Adrenal gland (tissue), 19 donors: ENCODE measurements at regions of chr19 and their contacts with region 1.

Region 1: GRCh38 chr19:23758187-23759074 is at the start of gene ZNF681:
- DNase-seq: peak; percentile 88 to 97 (median 94)
- H3K4me3 ChIP-seq: peak within 1 kb of the TSS; percentile 33 to 71 (median 62)
- H3K27ac ChIP-seq: peak within 1 kb of the TSS in 4 of 5 donors; percentile 57 to 80 (median 68)
- H3K4me1 ChIP-seq: peaks cover 0 to 9% of the 10 kb centered on the region in 2 donors
- H3K27me3 ChIP-seq: no peaks in the 10 kb centered on the region
- CTCF ChIP-seq: peak in 4 of 6 experiments; percentile 17 to 35 (median 28)
- POLR2A ChIP-seq: peak; percentile 40 to 78
- total RNA-seq, gene ZNF681: 0.96 to 5.8 (median 2.0) TPM

Region 2: GRCh38 chr19:23686621-23687423 is 71.6 kb before region 1 on chr19 and contains the start of gene ZNF675:
- intact Hi-C with region 1: loop called in 1 of 2 experiments (anchors 10 kb)
- DNase-seq: peak; percentile 88 to 98 (median 93)
- H3K4me3 ChIP-seq: peak within 1 kb of the TSS; percentile 37 to 91 (median 74)
- H3K27ac ChIP-seq: peak within 1 kb of the TSS; percentile 84 to 96 (median 88)
- H3K4me1 ChIP-seq: peaks cover 4 to 14% of the 10 kb centered on the region in 2 donors
- H3K27me3 ChIP-seq: no peaks in the 10 kb centered on the region
- CTCF ChIP-seq: peak in 1 of 6 experiments; percentile 17
- POLR2A ChIP-seq: peak; percentile 8 to 76
- total RNA-seq, gene ZNF675: 5.9 to 34.5 (median 11.0) TPM

Region 3: DNA sequence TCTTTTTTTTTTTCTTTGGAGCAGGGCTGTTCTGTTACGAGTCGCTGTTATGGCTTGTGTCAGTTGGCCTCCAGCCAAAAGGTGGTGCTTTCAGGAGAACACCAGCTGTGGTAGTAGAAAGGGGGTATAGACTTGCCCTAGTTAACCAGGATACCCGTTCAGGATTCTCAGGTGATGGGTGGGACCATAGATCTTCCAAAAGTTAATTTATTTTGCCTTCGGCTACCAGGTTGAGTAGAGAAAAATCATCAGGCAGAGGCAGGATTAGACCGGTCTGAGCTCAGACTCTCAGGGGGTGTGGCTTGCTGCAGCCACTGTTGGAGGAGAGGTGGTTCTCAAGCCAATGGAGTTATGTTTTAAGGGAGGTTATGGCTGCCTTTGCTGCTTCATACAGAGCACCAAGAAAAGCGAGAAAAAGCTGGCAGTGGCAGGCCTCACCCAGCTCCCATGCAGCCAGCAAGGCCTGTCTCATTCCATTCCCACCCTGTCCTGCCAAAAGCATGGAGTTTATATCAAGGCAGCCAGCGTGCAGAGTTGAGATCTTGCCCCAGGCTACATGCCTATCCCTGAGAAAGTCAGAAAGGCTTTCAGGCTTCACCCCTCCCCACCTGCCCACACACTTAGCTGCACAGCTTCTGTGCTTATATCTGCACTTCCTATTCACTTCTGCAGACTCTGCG is 59.2 kb before region 1 on chr19:
- intact Hi-C with region 1: no loop called
- DNase-seq: no peak
- H3K4me3 ChIP-seq: no peak overlapping the region
- H3K27ac ChIP-seq: no peak overlapping the region
- H3K4me1 ChIP-seq: no peaks in the 10 kb centered on the region
- H3K27me3 ChIP-seq: no peaks in the 10 kb centered on the region
- CTCF ChIP-seq: no peak
- POLR2A ChIP-seq: no peak